ENCODE measurements at regions of chr3 and their contacts with region 1.

Region 1: DNA sequence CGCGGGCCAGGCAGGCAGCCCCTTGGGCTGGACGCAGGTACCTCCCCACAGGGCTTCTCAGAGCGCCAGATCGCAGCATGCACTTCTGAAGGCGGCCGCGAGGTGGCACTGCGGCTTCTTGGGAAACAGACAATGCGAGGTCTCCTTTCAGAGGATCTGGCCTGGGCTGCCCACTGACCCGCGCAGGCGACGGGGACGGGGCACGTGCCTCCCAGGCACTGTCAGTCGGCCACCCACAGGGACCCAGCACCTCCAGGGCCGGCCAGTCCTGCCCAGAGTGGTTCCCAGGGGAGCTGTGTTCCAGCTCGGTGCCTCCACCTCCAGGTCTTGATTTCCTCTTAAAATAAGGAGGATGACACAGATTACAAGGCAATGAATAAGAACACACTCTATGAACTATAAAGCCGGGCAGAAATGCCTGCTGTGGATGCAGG is 24.4 kb upstream of the TXNRD3 start:
- DNase-seq: peak; percentile 92
- ATAC-seq: peak; percentile 86

Region 2: DNA sequence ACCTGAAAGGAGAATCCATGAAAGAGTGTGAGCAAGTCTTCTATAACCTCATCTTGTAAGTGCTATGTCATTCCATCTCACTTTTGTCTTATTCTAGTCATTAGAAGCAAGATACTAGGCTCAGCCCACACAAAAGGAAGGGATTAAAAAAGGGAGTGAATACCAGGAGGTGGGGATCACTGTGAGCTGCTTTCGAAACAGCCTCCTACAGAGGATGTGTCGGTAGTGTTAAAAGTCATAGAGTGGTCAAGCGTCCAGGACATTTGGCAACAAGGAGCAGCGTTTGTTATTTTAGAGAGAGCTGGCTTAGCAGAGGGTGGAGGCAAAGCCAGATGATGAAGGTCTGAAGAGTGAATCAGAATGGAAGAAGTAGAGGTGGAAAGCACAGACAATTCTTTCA is 1292.5 kb before region 1 on chr3:
- intact Hi-C with region 1: no loop called
- DNase-seq: no peak
- ATAC-seq: no peak

Region 3: GRCh38 chr3:126714921-126715320 is 35.6 kb after region 1 on chr3:
- intact Hi-C with region 1: no loop called
- DNase-seq: no peak
- ATAC-seq: no peak

Region 4: GRCh38 chr3:126995926-126996512 is 316.7 kb after region 1 on chr3:
- intact Hi-C with region 1: loop called (anchors 10 kb)
- DNase-seq: no peak
- ATAC-seq: no peak

Region 5: DNA sequence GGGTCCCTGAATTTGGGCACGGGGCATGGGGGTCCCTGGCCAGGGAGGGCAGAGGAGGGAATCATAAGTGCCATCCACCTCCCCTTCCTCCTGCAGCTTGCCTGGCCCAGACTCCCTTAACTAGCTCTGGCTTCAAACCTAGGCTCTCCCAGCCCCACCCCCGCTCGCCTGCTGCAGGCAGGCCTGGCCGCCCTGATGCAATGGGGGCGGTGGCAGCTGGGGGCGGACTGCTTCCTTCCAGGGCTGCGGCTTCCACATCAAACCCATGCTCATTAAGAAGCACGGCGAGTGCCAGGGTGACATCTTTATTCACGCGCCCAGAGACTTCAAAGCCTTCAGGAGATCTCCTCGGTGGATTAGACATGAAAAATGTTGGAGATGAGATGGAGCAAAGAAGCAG is 788.1 kb after region 1 on chr3:
- intact Hi-C with region 1: loop called (anchors 10 kb)
- DNase-seq: no peak
- ATAC-seq: no peak

Region 6: DNA sequence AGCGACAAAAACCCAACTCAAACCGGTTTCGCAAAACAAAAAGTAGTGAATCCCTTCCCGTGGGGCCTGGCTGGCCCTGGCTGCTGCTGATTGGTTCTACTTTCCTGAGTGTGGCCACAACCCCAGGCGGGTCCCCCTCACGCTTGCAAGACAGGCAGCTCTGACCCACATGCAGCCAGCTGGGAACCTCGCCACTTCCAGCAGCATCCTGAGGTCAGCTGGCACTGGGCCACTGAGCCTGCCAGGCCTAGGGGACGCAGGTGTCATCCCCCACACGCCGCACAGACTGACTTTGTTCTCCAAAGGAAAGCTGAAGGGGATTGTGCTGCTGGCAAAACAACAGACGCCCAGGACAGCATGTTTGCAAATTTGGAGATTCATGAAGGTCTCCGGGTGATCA is 800.1 kb after region 1 on chr3:
- intact Hi-C with region 1: no loop called
- DNase-seq: no peak
- ATAC-seq: peak; percentile 58

Region 7: GRCh38 chr3:127544192-127544802 is 865.0 kb after region 1 on chr3:
- intact Hi-C with region 1: loop called (anchors 10 kb)
- DNase-seq: peak; percentile 88
- ATAC-seq: peak; percentile 56

Measured in sciatic nerve (tissue), 2 donors.